PC-9 (cell line): ENCODE measurements at regions of chr3 and their contacts with region 1.

Region 1: DNA sequence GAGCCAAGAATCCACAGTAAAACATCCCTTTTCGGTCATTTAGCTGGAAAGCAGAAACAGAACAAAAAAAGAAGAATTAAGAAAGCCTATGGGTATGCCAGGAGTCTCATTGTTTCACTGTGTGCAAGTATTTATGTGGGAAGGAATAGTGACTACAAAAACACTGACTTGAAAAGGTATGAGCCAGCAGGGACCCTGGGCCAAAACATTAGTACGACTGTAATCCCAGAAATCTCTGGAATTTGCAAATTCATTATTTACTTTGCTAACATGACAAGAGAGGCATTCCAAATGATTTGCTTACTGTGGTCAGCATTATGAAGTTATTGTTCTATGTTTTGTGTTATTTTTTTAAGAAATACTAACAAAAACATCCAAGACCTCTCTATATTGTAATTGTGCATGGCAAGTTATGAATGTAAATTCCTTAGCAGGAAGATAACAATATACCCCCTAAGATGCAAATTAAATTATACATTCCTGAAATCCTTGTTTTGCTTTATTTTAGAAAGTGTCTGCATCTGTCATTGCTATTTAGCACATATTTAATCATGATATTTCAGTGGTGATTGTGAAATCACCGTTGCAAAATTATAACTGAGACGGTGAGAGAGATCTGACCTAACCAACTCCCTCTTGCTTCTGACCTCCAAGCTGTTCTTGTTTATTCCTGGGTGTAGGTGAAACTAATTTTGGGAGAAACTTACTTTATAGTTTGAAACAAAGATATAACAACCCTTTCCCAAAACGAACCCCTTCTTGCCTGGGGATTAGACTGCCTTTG is 299.2 kb downstream of the ZPLD1 start:
- DNase-seq: peak in 1 of 2 experiments; percentile 38
- H3K4me3 ChIP-seq: no peak overlapping the region
- H3K27ac ChIP-seq: no peak overlapping the region
- H3K4me1 ChIP-seq: no peaks in the 10 kb centered on the region
- H3K27me3 ChIP-seq: no peaks in the 10 kb centered on the region
- CTCF ChIP-seq: no peak

Region 2: GRCh38 chr3:101730839-101731238 is 1003.1 kb before region 1 on chr3:
- CTCF ChIA-PET with region 1: no interaction called
- POLR2A ChIA-PET with region 1: interaction called, 10 read pairs
- intact Hi-C with region 1: no loop called
- DNase-seq: no peak
- H3K4me3 ChIP-seq: no peak overlapping the region
- H3K27ac ChIP-seq: no peak overlapping the region
- H3K4me1 ChIP-seq: peaks cover 6% of the 10 kb centered on the region
- H3K27me3 ChIP-seq: no peaks in the 10 kb centered on the region
- CTCF ChIP-seq: no peak

Region 3: GRCh38 chr3:101950510-101950909 is 783.5 kb before region 1 on chr3:
- CTCF ChIA-PET with region 1: no interaction called
- POLR2A ChIA-PET with region 1: no interaction called
- intact Hi-C with region 1: no loop called
- DNase-seq: no peak
- H3K4me3 ChIP-seq: no peak overlapping the region
- H3K27ac ChIP-seq: no peak overlapping the region
- H3K4me1 ChIP-seq: peaks cover 8% of the 10 kb centered on the region
- H3K27me3 ChIP-seq: no peaks in the 10 kb centered on the region
- CTCF ChIP-seq: no peak

Region 4: DNA sequence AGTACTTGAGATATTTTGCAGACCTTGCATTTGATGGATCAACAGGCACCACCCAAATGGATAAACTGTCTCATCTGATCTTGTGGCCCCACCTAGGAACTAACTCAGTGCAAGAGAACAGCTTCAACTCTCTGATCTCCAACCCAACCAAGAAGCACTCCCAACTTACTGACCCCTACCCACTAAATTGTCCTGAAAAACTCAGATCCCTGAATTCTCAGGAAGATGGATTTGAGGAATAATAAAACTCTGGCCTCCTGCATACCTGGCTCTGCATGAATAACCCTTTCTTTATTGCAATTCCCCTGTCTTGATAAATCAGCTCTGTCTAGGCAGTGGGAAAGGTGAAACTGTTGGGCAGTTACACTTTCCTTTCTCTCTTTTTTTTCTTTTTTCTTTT is 51.2 kb before region 1 on chr3:
- CTCF ChIA-PET with region 1: no interaction called
- POLR2A ChIA-PET with region 1: no interaction called
- intact Hi-C with region 1: loop called (anchors 5 kb)
- DNase-seq: no peak
- H3K4me3 ChIP-seq: no peak overlapping the region
- H3K27ac ChIP-seq: no peak overlapping the region
- H3K4me1 ChIP-seq: no peaks in the 10 kb centered on the region
- H3K27me3 ChIP-seq: no peaks in the 10 kb centered on the region
- CTCF ChIP-seq: no peak

Region 5: GRCh38 chr3:102715030-102715697 is 18.8 kb before region 1 on chr3:
- CTCF ChIA-PET with region 1: interaction called, 3 read pairs
- POLR2A ChIA-PET with region 1: interaction called, 3 read pairs
- intact Hi-C with region 1: loop called (anchors 1 kb)
- DNase-seq: peak; percentile 16 to 68
- H3K4me3 ChIP-seq: peak overlapping the region; percentile 5; the same call in 1 of the 2 replicates
- H3K27ac ChIP-seq: peak overlapping the region; percentile 59
- H3K4me1 ChIP-seq: peaks cover 12% of the 10 kb centered on the region
- H3K27me3 ChIP-seq: no peaks in the 10 kb centered on the region
- CTCF ChIP-seq: no peak